ENCODE measurements at regions of chr16 and their contacts with region 1.

Region 1: DNA sequence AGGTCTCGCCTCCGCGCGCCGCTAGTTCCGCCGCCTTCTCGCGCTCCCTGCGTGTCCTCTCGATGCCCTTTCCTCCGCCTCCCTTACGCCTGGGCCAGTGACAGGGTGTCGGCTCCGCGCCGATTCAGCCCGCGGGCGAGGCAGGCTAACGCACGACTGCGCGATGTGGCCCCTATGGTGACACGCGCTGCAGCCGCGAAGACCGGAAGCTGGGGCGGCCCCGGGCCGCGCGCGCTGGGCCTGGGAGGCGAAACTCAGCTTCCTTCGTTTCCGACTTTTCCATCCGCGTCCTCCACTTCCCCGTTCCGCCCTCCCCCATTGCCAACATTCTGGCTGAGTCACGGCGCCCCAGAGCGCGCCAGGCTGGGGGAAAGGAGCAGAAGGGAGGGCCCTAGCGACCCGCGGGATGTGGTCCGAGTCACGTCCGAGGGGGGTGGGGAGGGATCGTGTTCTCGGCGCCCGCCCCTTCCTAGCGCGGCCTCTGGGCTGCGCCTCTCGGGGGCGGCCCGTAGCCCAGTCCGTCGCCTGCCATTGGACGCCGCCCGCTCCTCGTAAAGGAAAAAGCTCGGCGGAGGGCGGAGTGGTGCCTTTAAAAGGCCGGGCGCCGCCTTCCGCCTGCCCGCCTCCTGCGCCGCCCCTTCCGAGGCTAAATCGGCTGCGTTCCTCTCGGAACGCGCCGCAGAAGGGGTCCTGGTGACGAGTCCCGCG is at the start of gene ALDOA:
- DNase-seq: peak; percentile 97 to 98
- ATAC-seq: peak; percentile 56 to 67
- H3K4me3 ChIP-seq: peak within 1 kb of the TSS; percentile 75 to 91 (median 85)
- H3K27ac ChIP-seq: peak within 1 kb of the TSS; percentile 97 to 100 (median 100)
- H3K4me1 ChIP-seq: peaks cover 70 to 76% of the 10 kb centered on the region in 2 donors
- H3K27me3 ChIP-seq: no peaks in the 10 kb centered on the region
- CTCF ChIP-seq: peak in 1 of 5 experiments; percentile 8
- POLR2A ChIP-seq: peak; percentile 99
- total RNA-seq, gene ALDOA: 6,096 to 10,805 (median 7,093) TPM

Region 2: DNA sequence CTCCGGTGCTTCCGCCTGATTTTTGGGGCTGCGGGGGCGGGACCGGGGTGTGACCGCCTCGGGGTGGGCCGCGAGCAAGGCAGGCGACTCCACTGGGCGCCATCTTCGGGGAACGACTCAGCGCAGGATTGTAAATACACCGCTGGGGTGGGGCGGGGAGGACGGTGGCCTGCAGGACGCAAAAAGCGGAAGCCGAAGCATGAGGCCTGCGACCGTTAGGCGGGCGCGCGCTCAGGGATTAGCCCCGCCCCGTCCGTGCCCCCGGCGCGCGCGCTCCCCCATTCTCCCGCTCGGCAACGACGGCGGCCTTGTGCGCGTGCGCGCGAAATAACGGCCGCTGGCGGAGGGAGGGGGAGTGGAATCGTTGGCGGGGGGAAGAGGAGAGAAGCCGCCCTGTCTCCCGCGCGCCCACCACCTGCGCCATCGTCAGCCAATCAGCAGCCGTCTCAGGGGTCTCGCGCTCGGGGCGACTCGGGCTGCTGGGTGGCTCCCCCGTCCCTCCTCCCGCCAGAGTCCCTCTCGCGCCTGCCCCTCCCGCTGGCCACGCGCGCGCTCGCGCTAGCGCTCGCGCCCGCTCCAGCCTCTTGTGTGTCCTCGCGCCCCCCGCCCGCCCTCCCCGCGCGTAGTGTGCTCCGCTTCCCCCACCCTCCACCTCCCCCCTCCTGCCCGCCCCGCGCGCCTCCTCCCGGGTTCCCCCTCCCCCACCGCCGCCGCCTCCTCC is 259.8 kb before region 1 on chr16:
- in situ Hi-C with region 1: no loop called
- intact Hi-C with region 1: loop called (anchors 2 kb)
- DNase-seq: peak; percentile 97
- ATAC-seq: peak; percentile 74 to 75
- H3K4me3 ChIP-seq: peak overlapping the region; percentile 61 to 92 (median 80)
- H3K27ac ChIP-seq: peak overlapping the region; percentile 87 to 99 (median 96)
- H3K4me1 ChIP-seq: peaks cover 41 to 44% of the 10 kb centered on the region in 2 donors
- H3K27me3 ChIP-seq: no peaks in the 10 kb centered on the region
- CTCF ChIP-seq: peak in 1 of 5 experiments; percentile 39
- POLR2A ChIP-seq: peak; percentile 93 to 95

Region 3: DNA sequence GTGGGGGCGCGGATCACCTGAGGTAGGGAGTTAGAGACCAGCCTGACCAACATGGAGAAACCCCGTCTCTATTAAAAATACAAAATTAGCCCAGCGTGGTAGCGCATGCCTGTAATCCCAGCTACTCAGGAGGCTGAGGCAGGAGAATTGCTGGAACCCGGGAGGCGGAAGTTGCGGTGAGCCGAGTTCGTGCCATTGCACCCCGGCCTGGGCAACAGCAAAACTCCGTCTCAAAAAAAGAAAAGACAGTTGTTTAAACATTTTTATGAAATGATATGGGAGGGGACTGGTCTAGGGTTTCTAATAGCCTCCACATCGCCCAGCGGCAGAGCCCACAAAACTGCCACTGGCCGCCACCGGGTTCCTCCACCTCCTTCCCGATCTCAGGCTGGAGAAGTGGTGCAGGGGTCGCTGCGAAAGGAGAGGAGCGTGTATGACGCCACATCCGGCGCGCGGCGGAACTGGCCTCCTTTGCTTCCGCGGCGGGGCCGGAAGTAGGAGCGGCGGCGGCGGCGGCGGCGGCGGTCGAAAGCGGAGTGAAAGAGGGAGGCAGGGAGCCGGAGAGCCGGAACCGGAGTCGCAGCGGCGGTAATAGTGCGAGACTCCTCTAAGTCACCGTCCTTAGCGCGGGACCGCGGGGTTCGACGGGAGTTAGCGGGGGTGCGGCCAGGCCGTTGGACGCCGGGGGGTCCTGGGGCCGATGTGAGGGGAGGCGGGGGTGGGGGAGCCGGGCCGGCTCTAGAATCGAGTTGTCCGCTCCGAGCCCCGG is 10.4 kb after region 1 on chr16 and contains the start of gene PPP4C:
- in situ Hi-C with region 1: no loop called
- intact Hi-C with region 1: loop called (anchors 1 kb)
- DNase-seq: peak; percentile 84 to 89
- ATAC-seq: peak; percentile 85 to 86
- H3K4me3 ChIP-seq: peak within 1 kb of the TSS; percentile 80 to 99 (median 89)
- H3K27ac ChIP-seq: peak within 1 kb of the TSS; percentile 89 to 97 (median 90)
- H3K4me1 ChIP-seq: peaks cover 16 to 19% of the 10 kb centered on the region in 2 donors
- H3K27me3 ChIP-seq: no peaks in the 10 kb centered on the region
- CTCF ChIP-seq: peak in 2 of 5 experiments; percentile 11 to 16
- POLR2A ChIP-seq: peak; percentile 82 to 85
- total RNA-seq, gene PPP4C: 23.8 to 64.3 (median 44.7) TPM

Region 4: GRCh38 chr16:30122604-30123160 is 57.4 kb after region 1 on chr16:
- in situ Hi-C with region 1: no loop called
- intact Hi-C with region 1: loop called (anchors 1 kb)
- DNase-seq: no peak
- ATAC-seq: no peak
- H3K4me3 ChIP-seq: peak overlapping the region; percentile 79 to 92 (median 86)
- H3K27ac ChIP-seq: peak overlapping the region; percentile 85 to 96 (median 87)
- H3K4me1 ChIP-seq: peaks cover 14 to 18% of the 10 kb centered on the region in 2 donors
- H3K27me3 ChIP-seq: no peaks in the 10 kb centered on the region
- CTCF ChIP-seq: no peak
- POLR2A ChIP-seq: no peak

Region 5: GRCh38 chr16:30407102-30407803 is 342.0 kb after region 1 on chr16 and contains the start of gene ZNF771:
- in situ Hi-C with region 1: loop called in 1 of 4 experiments (anchors 25 kb)
- intact Hi-C with region 1: loop called (anchors 10 kb)
- DNase-seq: peak; percentile 84 to 90
- ATAC-seq: peak; percentile 91
- H3K4me3 ChIP-seq: peak within 1 kb of the TSS; percentile 59 to 98 (median 85)
- H3K27ac ChIP-seq: peak within 1 kb of the TSS; percentile 92 to 98 (median 94)
- H3K4me1 ChIP-seq: peaks cover 23 to 28% of the 10 kb centered on the region in 2 donors
- H3K27me3 ChIP-seq: no peaks in the 10 kb centered on the region
- CTCF ChIP-seq: no peak
- POLR2A ChIP-seq: peak; percentile 83 to 85
- total RNA-seq, gene ZNF771: 16.7 to 34.1 (median 24.7) TPM